Endothelial cell of umbilical vein (primary cell): ENCODE measurements at regions of chr9 and their contacts with region 1.

Region 1: DNA sequence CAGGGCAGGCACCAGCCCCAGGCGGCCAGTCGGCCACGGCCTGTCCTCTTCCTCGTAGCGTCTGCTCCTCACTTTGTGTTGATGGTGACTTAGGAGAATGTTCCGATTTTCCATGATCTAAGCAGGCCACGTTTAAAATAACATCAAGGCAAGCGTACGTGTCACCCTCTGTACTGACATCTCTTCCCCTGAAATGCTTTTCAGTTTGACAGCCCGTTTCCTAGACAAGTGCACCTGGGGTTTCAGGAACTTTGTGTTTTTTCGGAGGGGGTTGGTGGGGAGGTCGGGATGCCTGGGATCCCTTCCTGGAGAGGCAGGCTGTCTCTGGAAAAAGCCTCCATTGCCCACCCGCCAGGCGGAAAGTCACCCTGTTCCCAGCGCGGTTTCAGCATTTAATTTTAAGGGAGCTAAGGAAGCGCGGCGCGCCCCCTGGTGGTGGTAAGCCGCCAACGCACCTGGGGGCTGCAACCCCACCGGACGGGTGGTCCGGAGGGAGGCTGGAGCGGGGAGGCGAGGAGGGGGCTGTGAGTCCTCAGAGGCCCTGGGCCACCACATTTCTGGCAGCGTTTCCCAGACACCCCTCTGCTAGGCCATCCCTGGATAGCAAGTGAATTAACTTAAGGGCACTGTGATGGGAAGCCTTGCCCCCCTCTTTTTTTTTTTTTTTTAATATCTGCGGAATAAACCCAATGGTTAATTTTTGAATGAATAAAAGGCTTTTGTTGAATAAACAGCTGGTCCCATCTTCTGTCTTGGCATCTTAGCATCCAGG is 29.5 kb upstream of the HMCN2 start:
- DNase-seq: peak; percentile 49
- H3K4me3 ChIP-seq: no peak overlapping the region
- H3K27ac ChIP-seq: no peak overlapping the region
- H3K4me1 ChIP-seq: peaks cover 8% of the 10 kb centered on the region
- H3K27me3 ChIP-seq: no peaks in the 10 kb centered on the region
- CTCF ChIP-seq: peak; percentile 94 to 98
- POLR2A ChIP-seq: no peak

Region 2: DNA sequence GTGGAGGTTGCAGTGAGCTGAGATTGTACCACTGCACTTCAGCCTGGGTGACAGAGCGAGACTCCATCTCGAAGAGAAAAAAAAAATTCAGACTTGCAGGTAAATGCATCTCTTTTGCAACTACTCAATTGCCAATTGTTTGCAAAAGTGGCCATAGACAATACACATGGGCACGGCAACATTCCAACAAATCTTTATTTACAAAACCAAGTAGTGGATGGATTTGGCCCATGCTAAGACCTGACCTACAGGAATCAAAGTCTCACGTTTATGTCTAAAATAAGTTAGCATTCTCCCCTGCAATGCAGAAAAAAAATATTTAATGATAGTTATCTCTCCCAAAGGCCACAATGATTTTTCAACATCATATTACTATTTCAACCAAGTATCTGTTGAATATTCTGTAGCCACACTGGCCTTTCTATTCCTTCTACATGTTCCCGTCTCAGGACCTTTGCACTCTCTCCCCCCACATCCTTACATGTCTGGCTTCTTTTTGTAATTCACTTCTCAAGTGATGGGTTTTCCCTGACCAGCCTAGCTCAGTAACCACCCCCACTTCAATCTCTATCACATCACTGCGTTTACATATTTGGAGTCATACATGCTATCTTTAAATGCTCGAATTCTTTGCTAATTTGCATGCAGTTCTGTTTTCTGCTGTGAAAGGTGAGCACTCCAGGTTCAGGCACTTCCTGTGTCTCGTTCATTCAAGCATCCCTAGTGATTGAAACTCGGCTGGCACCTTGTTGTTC is 247.3 kb before region 1 on chr9:
- CTCF ChIA-PET with region 1: no interaction called
- POLR2A ChIA-PET with region 1: no interaction called
- dilution Hi-C with region 1: no loop called
- intact Hi-C with region 1: no loop called
- DNase-seq: no peak
- H3K4me3 ChIP-seq: no peak overlapping the region
- H3K27ac ChIP-seq: no peak overlapping the region
- H3K4me1 ChIP-seq: no peaks in the 10 kb centered on the region
- H3K27me3 ChIP-seq: no peaks in the 10 kb centered on the region
- CTCF ChIP-seq: no peak
- POLR2A ChIP-seq: no peak

Region 3: GRCh38 chr9:130114741-130115140 is 121.3 kb before region 1 on chr9:
- CTCF ChIA-PET with region 1: interaction called, 14 read pairs
- POLR2A ChIA-PET with region 1: no interaction called
- dilution Hi-C with region 1: no loop called
- intact Hi-C with region 1: no loop called
- DNase-seq: no peak
- H3K4me3 ChIP-seq: no peak overlapping the region
- H3K27ac ChIP-seq: no peak overlapping the region
- H3K4me1 ChIP-seq: peaks cover 14% of the 10 kb centered on the region
- H3K27me3 ChIP-seq: no peaks in the 10 kb centered on the region
- CTCF ChIP-seq: no peak
- POLR2A ChIP-seq: no peak

Region 4: GRCh38 chr9:130186839-130187522 is 49.1 kb before region 1 on chr9:
- CTCF ChIA-PET with region 1: no interaction called
- POLR2A ChIA-PET with region 1: no interaction called
- dilution Hi-C with region 1: no loop called
- intact Hi-C with region 1: no loop called
- DNase-seq: no peak
- H3K4me3 ChIP-seq: no peak overlapping the region
- H3K27ac ChIP-seq: no peak overlapping the region
- H3K4me1 ChIP-seq: no peaks in the 10 kb centered on the region
- H3K27me3 ChIP-seq: no peaks in the 10 kb centered on the region
- CTCF ChIP-seq: no peak
- POLR2A ChIP-seq: no peak

Region 5: GRCh38 chr9:130396581-130396980 is 160.5 kb after region 1 on chr9:
- CTCF ChIA-PET with region 1: no interaction called
- POLR2A ChIA-PET with region 1: no interaction called
- dilution Hi-C with region 1: no loop called
- intact Hi-C with region 1: no loop called
- DNase-seq: no peak
- H3K4me3 ChIP-seq: no peak overlapping the region
- H3K27ac ChIP-seq: no peak overlapping the region
- H3K4me1 ChIP-seq: no peaks in the 10 kb centered on the region
- H3K27me3 ChIP-seq: no peaks in the 10 kb centered on the region
- CTCF ChIP-seq: no peak
- POLR2A ChIP-seq: no peak